ENCODE measurements at regions of chr3 and their contacts with region 1.

Region 1: DNA sequence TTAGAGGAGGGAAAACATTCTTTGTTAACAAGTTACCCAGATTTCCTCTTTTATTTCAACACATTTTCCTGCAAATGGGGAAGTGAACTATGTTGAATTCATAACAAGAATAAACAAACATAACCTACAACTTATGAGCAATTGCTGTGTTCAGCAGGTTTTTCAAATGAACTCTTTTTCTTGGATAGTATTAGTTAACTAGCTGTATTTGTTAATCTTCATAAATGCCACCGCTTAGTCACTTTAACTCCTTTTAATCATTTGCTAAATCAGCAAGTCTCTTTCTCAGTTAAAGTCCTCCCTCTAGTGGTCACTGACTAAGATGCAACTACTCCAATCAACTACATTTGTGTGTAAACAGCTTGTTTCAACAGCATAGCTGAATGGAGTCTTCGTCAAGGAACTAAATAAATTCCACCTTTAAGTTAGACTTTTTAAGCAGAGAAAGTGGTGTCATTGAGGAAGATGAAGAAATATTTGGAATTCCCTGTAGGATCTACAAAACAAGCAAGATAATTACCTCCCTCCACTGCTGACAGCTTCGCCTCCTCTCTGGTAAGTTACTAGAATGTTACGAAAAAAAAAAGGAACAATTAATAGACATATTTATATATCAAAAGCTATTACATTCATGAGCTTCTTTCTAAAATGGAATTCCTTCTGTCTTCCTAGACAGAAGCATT is 1122.0 kb downstream of the ROBO1 start:
- DNase-seq: peak; percentile 93
- ATAC-seq: peak; percentile 79
- H3K4me3 ChIP-seq: no peak overlapping the region
- H3K27ac ChIP-seq: no peak overlapping the region
- H3K4me1 ChIP-seq: peaks cover 13% of the 10 kb centered on the region
- H3K27me3 ChIP-seq: no peaks in the 10 kb centered on the region
- CTCF ChIP-seq: peak; percentile 97

Region 2: GRCh38 chr3:77038468-77038929 is 1607.3 kb before region 1 on chr3:
- CTCF ChIA-PET with region 1: interaction called, 9 read pairs
- POLR2A ChIA-PET with region 1: interaction called, 3 read pairs
- intact Hi-C with region 1: loop called (anchors 1 kb)
- DNase-seq: peak; percentile 83
- ATAC-seq: peak; percentile 97
- H3K4me3 ChIP-seq: peak overlapping the region; percentile 29; the same call in 1 of the 2 replicates
- H3K27ac ChIP-seq: no peak overlapping the region
- H3K4me1 ChIP-seq: no peaks in the 10 kb centered on the region
- H3K27me3 ChIP-seq: peaks cover 72% of the 10 kb centered on the region
- CTCF ChIP-seq: peak; percentile 77

Region 3: GRCh38 chr3:77348231-77348855 is 1297.4 kb before region 1 on chr3:
- CTCF ChIA-PET with region 1: no interaction called
- POLR2A ChIA-PET with region 1: no interaction called
- intact Hi-C with region 1: loop called (anchors 1 kb)
- DNase-seq: peak; percentile 63
- ATAC-seq: peak; percentile 81
- H3K4me3 ChIP-seq: no peak overlapping the region
- H3K27ac ChIP-seq: no peak overlapping the region
- H3K4me1 ChIP-seq: no peaks in the 10 kb centered on the region
- H3K27me3 ChIP-seq: no peaks in the 10 kb centered on the region
- CTCF ChIP-seq: peak; percentile 70

Region 4: GRCh38 chr3:78221300-78221699 is 424.5 kb before region 1 on chr3:
- CTCF ChIA-PET with region 1: interaction called, 4 read pairs
- POLR2A ChIA-PET with region 1: no interaction called
- intact Hi-C with region 1: loop called (anchors 1 kb)
- DNase-seq: peak; percentile 26
- ATAC-seq: peak; percentile 73
- H3K4me3 ChIP-seq: no peak overlapping the region
- H3K27ac ChIP-seq: no peak overlapping the region
- H3K4me1 ChIP-seq: no peaks in the 10 kb centered on the region
- H3K27me3 ChIP-seq: no peaks in the 10 kb centered on the region
- CTCF ChIP-seq: peak; percentile 48

Region 5: GRCh38 chr3:78506581-78507195 is 139.1 kb before region 1 on chr3:
- CTCF ChIA-PET with region 1: no interaction called
- POLR2A ChIA-PET with region 1: no interaction called
- intact Hi-C with region 1: loop called (anchors 1 kb)
- DNase-seq: peak; percentile 95
- ATAC-seq: peak; percentile 96
- H3K4me3 ChIP-seq: peak overlapping the region; percentile 29; the same call in 1 of the 2 replicates
- H3K27ac ChIP-seq: peak overlapping the region; percentile 79
- H3K4me1 ChIP-seq: peaks cover 27% of the 10 kb centered on the region
- H3K27me3 ChIP-seq: no peaks in the 10 kb centered on the region
- CTCF ChIP-seq: no peak